Endothelial cell of umbilical vein (primary cell): ENCODE measurements at regions of chr9 and their contacts with region 1.

Region 1: DNA sequence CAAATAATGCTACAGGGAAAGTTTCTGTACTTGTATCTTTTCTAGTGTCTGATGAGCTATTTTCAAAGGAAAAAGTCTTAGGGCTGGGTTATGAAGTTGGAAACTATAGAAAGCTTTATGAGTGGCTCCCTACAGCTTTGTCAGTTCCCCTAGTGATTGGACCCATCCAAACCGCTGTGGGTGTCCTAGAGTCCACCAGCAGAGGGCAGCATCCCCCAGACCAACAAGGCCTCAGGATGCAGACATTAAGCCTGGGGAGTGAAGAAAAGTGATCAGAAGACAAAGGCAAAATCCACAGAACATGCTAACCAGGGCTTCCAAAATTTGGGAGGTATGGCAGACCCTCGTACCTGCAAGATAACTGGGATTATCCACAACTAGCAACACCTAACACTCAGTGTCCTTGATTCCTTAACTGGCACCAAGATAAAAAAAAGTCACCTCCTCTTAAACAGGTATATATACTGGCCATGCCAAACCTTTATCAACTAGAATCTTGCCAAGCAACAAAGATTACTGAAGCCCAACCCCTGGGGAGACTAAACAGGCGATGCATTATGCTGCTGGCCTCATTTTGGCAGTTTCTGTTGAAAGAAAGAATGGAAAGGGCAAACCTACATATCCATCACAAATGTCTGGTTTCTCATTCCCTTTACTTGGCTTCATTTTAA is 110.4 kb upstream of the NR5A1 start:
- DNase-seq: peak; percentile 75
- H3K4me3 ChIP-seq: no peak overlapping the region
- H3K27ac ChIP-seq: no peak overlapping the region
- H3K4me1 ChIP-seq: no peaks in the 10 kb centered on the region
- H3K27me3 ChIP-seq: peaks cover 0 to 8% of the 10 kb centered on the region in 2 experiments
- CTCF ChIP-seq: peak; percentile 82 to 89
- POLR2A ChIP-seq: no peak

Region 2: GRCh38 chr9:124574534-124575341 is 42.9 kb before region 1 on chr9:
- CTCF ChIA-PET with region 1: interaction called, 12 read pairs
- POLR2A ChIA-PET with region 1: no interaction called
- dilution Hi-C with region 1: no loop called
- intact Hi-C with region 1: no loop called
- DNase-seq: peak; percentile 35
- H3K4me3 ChIP-seq: no peak overlapping the region
- H3K27ac ChIP-seq: no peak overlapping the region
- H3K4me1 ChIP-seq: peaks cover 2% of the 10 kb centered on the region
- H3K27me3 ChIP-seq: peaks cover 5% of the 10 kb centered on the region in 2 experiments
- CTCF ChIP-seq: no peak
- POLR2A ChIP-seq: no peak

Region 3: DNA sequence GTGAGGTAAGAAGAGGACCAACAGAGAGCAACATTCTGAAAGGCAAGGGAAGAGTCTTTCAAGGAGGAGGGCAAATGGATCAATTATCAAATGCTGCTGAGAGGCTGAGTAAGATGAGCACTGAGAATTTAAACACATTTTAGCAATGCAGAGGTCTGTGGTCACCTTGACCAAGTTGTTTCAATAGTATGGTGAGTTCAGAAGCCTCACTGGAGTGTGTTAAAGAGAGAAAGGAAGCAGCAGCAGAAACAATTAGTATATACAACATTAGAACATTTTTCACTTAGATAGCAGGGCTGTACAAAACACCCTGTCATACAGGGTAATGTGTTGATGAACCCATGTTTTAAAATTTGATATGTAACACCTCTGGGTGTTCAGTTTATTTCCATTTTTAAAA is 22.0 kb after region 1 on chr9:
- CTCF ChIA-PET with region 1: interaction called, 26 read pairs
- POLR2A ChIA-PET with region 1: no interaction called
- dilution Hi-C with region 1: no loop called
- intact Hi-C with region 1: no loop called
- DNase-seq: no peak
- H3K4me3 ChIP-seq: no peak overlapping the region
- H3K27ac ChIP-seq: no peak overlapping the region
- H3K4me1 ChIP-seq: no peaks in the 10 kb centered on the region
- H3K27me3 ChIP-seq: peaks cover 7 to 15% of the 10 kb centered on the region in 2 experiments
- CTCF ChIP-seq: no peak
- POLR2A ChIP-seq: no peak

Region 4: GRCh38 chr9:124680714-124681390 is 63.2 kb after region 1 on chr9:
- CTCF ChIA-PET with region 1: interaction called, 22 read pairs
- POLR2A ChIA-PET with region 1: no interaction called
- dilution Hi-C with region 1: no loop called
- intact Hi-C with region 1: no loop called
- DNase-seq: no peak
- H3K4me3 ChIP-seq: no peak overlapping the region
- H3K27ac ChIP-seq: no peak overlapping the region
- H3K4me1 ChIP-seq: no peaks in the 10 kb centered on the region
- H3K27me3 ChIP-seq: no peaks in the 10 kb centered on the region
- CTCF ChIP-seq: no peak
- POLR2A ChIP-seq: no peak

Region 5: DNA sequence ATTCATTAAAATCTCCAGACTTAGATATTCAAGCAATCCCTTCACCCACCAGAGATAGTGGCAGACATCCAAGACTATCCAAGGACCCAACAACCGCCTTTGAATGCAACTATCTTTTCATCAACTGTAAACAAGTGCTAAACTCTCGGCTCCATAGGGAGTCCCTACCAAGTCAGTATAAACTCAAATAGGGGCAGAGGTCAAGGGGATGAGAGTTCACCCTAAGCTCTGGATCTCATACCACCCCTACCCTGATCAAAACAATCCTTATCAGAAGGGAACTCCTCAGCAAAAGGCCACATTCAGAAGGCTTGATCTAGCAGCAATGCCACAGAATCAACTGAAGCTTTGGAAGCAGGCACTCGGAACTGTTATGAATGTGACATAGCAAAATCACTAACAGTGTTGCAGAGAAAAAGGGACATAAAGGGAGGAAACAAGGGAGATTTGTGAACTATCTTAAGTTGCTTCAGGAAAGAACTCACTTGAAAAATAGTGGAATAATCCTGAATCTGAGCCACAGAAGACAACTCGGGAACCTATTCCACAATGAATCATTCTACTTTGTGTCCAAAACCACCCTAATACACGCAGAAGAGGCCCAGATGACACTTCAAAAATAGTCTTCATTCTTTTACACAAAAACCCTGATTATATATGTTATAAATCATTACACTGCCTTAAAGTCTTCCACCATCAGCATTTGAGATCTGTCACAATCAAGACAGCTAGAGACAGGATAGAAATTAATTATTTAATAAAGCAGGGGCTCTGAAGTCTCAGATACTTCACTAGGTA is 103.7 kb after region 1 on chr9:
- CTCF ChIA-PET with region 1: interaction called, 439 read pairs
- POLR2A ChIA-PET with region 1: no interaction called
- dilution Hi-C with region 1: no loop called
- intact Hi-C with region 1: no loop called
- DNase-seq: no peak
- H3K4me3 ChIP-seq: no peak overlapping the region
- H3K27ac ChIP-seq: no peak overlapping the region
- H3K4me1 ChIP-seq: no peaks in the 10 kb centered on the region
- H3K27me3 ChIP-seq: no peaks in the 10 kb centered on the region
- CTCF ChIP-seq: no peak
- POLR2A ChIP-seq: no peak

Region 6: DNA sequence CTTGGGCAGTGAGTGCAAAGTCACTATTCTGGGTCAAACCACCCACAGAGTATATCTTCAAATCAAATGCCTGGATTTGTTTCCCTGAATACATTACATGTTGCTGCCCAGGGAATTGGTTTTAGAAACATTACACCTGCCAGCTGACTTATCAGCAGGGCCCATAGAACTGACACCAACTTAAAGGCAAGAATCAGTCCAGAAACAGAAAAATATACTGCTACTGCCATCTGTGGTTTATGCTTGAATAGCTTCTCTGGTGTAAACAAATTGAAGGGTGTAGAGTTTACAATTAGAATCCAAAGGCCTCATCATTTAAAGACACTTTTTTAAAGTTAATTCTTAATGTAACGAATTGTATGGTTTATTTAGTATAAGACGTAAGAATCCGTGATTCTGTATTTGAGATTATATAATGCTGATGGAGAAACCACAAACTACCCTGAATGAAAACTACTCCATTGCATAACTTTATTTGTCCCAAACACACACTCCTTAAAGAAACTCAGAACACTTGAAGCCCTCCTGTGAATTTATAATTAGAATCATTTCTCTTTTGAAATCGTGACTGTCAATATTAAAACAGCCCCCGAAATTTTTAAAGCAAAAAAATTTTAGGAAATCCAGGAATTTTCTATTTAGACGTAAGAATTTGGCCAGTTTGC is 147.3 kb after region 1 on chr9:
- CTCF ChIA-PET with region 1: interaction called, 82 read pairs
- POLR2A ChIA-PET with region 1: no interaction called
- dilution Hi-C with region 1: no loop called
- intact Hi-C with region 1: loop called (anchors 1 kb)
- DNase-seq: peak; percentile 47
- H3K4me3 ChIP-seq: no peak overlapping the region
- H3K27ac ChIP-seq: no peak overlapping the region
- H3K4me1 ChIP-seq: peaks cover 5% of the 10 kb centered on the region
- H3K27me3 ChIP-seq: peaks cover 57 to 91% of the 10 kb centered on the region in 2 experiments
- CTCF ChIP-seq: peak in 1 of 2 donors; percentile 19
- POLR2A ChIP-seq: no peak